SK-MEL-5 (cell line): ENCODE measurements at regions of chr2 and their contacts with region 1.

Region 1: DNA sequence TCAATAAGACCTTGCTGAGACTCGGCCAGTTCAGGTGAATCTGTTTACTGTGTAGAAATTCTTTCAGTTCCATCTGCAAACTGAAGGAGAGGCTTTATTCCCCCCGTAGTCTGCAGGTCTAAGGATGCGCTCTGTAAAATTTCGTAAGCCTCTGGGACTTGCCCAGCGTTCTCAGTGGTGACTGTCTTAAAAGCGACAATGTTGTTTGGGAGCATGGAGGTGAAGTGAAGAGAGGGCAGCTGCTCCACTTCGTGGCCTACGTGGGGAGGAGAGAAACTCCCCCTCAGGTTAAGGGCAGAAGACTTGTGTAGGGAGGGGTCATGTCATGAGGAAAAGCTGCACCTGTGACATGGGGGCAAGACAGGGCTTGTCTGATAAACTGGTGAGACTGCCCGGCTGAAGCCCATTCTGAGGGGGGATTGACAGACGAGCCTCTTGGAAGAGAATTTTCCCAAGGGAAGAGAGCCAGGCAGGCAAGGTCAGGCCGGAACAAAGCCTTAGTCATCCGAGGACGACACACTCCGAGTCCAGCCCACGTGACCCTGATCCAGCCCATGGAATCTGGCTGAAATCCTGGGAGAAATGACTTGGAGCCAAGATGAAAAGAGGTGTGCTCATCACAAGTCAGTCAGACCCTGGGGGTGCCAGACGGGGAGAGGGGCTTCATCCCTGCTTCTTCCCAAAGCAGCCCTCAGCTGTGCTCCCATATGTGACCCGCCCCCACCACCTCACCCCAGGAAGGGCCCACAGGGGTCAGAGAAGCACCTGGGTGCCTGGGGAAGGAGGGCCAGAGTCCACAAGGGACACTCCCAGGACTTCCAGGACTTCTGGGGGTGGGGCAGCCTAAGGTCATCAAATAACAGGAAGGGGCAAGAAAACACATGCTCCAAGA is 88.5 kb upstream of the SH3BP4 start:
- DNase-seq: peak; percentile 98

Region 2: DNA sequence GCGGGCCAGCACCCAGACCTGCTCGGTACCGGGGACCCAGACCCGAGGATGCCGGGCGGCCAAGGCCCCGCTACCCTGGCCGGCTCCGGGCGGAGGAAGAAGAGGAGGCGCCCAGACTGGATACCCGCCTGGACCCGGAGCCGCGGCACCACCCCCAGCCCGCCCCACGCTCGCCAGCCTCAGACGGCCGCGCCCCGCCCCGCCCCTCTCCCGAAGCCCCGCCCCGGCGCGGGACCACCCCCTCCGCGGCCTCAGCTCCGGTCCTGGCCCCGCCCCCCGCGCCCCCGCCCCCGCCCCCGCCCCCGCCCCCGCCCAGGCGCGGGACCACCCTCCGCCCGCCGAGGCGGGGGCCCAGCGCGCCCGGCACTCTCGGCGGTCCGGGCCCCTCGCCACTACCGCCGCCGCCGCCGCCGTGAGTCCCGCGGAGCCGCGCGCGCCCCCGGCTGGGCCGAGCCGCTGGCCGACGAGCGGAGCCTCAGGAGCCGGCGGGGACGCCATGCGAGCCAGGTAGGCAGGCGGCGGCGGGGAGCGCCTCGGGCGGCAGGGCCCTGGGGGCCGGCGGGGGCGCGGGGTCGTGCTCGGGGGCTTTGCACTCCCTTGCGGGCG is 88.5 kb after region 1 on chr2 and contains the start of gene SH3BP4:
- in situ Hi-C with region 1: no loop called
- DNase-seq: peak; percentile 65
- total RNA-seq, gene SH3BP4: 115 and 116 TPM in 2 replicates

Region 3: DNA sequence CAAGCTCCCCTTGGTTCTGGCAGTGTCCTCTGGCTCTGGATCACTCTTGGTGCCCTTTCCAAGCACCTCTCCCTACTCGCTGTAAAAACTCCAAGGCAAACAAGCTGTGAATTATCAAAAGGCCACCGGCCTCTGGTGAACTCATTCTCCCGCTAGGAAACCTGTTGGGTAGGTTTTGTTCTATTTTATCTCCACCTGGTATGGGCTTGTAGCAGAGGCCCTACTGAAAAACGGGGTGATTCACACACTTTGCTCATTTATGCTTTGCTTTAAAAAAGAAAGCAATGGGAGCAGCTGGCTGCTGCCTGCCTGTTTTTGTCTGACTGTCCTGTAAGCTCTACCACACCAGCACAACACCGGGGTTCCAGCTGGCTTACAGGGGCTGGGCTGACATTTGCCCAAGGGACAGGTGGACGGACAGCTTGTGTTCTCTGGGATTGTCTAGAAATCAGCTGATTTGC is 145.3 kb after region 1 on chr2:
- in situ Hi-C with region 1: no loop called
- DNase-seq: no peak

Region 4: GRCh38 chr2:235087812-235088495 is 224.7 kb after region 1 on chr2:
- in situ Hi-C with region 1: loop called (anchors 25 kb)
- DNase-seq: no peak